Heart left ventricle (tissue), 16 donors: ENCODE measurements at regions of chr1 and their contacts with region 1.

Region 1: DNA sequence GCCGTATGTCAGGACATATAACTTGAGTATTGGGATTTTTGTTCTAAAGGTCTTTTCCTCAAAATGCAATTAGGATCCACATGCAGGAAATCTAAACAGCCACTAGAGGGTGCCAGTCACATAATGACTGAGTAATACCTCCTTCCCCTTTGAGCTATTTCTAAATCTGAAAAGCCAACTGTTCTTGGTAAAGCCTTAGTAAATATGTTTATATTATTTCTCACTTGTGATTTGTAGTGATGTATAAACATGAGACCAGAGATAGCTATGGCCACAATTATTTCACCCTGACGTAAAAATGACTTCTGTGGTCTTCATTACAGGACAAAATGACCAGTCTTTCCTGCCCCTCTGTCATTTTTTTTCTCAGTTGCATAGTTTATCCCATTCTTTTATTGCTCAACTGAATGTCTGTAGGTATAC is 41.0 kb upstream of the DR1 start:
- DNase-seq: peak in 2 of 5 donors; percentile 30 to 41
- ATAC-seq: peak in 3 of 4 donors; percentile 65 to 74 (median 70)
- H3K4me3 ChIP-seq: no peak overlapping the region
- H3K27ac ChIP-seq: no peak overlapping the region
- H3K4me1 ChIP-seq: peaks cover 0 to 5% (median 0%) of the 10 kb centered on the region in 12 donors
- H3K27me3 ChIP-seq: no peaks in the 10 kb centered on the region
- CTCF ChIP-seq: peak; percentile 80 to 96 (median 90)
- POLR2A ChIP-seq: no peak

Region 2: GRCh38 chr1:93155335-93155734 is 149.4 kb before region 1 on chr1:
- intact Hi-C with region 1: no loop called
- DNase-seq: no peak
- ATAC-seq: no peak
- H3K4me3 ChIP-seq: no peak overlapping the region
- H3K27ac ChIP-seq: no peak overlapping the region
- H3K4me1 ChIP-seq: peaks cover 0 to 7% (median 0%) of the 10 kb centered on the region in 12 donors
- H3K27me3 ChIP-seq: no peaks in the 10 kb centered on the region
- CTCF ChIP-seq: no peak
- POLR2A ChIP-seq: no peak

Region 3: DNA sequence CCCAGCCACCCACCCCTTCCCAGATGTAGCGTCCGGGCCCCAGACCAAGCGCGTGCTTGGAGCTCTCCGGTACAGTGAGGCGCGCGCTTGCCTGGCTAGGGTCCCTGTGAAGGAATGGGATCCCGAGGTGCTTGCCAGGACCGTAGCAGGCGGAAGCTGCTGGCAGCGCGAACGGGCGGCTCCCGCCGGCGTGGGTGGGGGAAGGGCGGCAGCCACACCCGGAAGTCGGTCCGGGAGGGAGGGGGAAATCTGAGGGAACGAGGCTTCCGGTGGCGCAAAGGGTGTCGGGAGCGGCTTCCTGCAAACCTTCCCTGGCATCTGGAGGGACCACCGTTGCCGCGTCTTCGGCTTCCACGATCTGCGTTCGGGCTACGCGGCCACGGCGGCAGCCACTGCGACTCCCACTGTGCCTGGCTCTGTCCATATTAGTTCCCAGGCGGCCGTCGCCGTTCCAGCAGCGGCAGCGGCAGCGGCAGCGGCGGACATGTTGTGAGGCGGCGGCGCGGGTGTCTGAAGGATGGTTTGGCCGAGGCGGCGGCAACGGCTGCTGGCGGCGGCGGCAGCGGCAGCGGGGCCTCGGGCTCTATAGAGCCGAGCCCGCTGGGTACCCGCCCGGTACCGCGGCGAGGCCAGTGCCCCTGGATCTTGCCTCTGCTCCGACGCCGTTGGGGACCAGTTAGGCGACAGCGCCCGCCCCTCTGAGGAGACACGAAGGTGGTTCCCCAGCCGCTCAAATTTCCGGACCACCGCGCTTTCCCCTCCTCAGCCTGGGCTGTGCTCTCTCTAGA is 41.1 kb after region 1 on chr1 and contains the start of gene DR1:
- intact Hi-C with region 1: loop called in 2 of 10 experiments (anchors 5 kb)
- DNase-seq: peak; percentile 96 to 97 (median 96)
- ATAC-seq: peak; percentile 94 to 98 (median 98)
- H3K4me3 ChIP-seq: peak within 1 kb of the TSS; percentile 65 to 98 (median 92)
- H3K27ac ChIP-seq: peak within 1 kb of the TSS; percentile 82 to 98 (median 94)
- H3K4me1 ChIP-seq: peaks cover 0 to 38% (median 28%) of the 10 kb centered on the region in 12 donors
- H3K27me3 ChIP-seq: no peaks in the 10 kb centered on the region
- CTCF ChIP-seq: no peak
- POLR2A ChIP-seq: peak in 1 of 2 donors; percentile 71
- total RNA-seq, gene DR1: 21.6 to 45.1 (median 37.8) TPM

Region 4: DNA sequence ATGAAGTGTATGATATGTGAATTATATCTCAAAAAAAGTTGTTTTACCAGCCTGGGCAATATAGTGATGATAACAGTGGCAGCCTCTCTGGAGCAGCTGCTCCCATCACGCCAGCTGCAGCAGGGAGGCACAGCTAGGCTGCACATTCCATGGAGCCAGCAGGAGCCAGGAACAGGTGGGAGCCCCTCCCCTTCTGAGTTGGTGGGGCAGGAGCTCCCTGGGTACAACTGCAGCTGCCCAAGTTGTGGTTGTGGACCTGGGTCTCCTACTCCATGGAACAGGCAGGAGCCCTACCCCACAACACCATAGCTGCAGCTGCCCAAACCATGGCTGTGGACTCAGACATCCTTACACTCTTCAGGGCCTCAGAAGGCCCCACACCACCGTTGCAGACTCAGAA is 121.5 kb after region 1 on chr1:
- intact Hi-C with region 1: loop called in 9 of 10 experiments (anchors 5 to 10 kb)
- DNase-seq: no peak
- ATAC-seq: no peak
- H3K4me3 ChIP-seq: no peak overlapping the region
- H3K27ac ChIP-seq: no peak overlapping the region
- H3K4me1 ChIP-seq: peaks cover 0 to 2% (median 0%) of the 10 kb centered on the region in 12 donors
- H3K27me3 ChIP-seq: no peaks in the 10 kb centered on the region
- CTCF ChIP-seq: no peak
- POLR2A ChIP-seq: no peak

Region 5: GRCh38 chr1:93437976-93438605 is 133.4 kb after region 1 on chr1:
- intact Hi-C with region 1: loop called in 8 of 10 experiments (anchors 5 to 10 kb)
- DNase-seq: no peak
- ATAC-seq: peak; percentile 42 to 71 (median 46)
- H3K4me3 ChIP-seq: no peak overlapping the region
- H3K27ac ChIP-seq: no peak overlapping the region
- H3K4me1 ChIP-seq: peaks cover 0 to 7% (median 0%) of the 10 kb centered on the region in 12 donors
- H3K27me3 ChIP-seq: no peaks in the 10 kb centered on the region
- CTCF ChIP-seq: peak; percentile 63 to 82 (median 72)
- POLR2A ChIP-seq: no peak

Region 6: GRCh38 chr1:93615582-93616150 is 310.9 kb after region 1 on chr1:
- intact Hi-C with region 1: loop called in 3 of 10 experiments (anchors 5 to 10 kb)
- DNase-seq: no peak
- ATAC-seq: no peak
- H3K4me3 ChIP-seq: no peak overlapping the region
- H3K27ac ChIP-seq: peak overlapping the region in 11 of 12 donors; percentile 39 to 79 (median 68)
- H3K4me1 ChIP-seq: peaks cover 7 to 84% (median 52%) of the 10 kb centered on the region in 12 donors
- H3K27me3 ChIP-seq: no peaks in the 10 kb centered on the region
- CTCF ChIP-seq: no peak
- POLR2A ChIP-seq: no peak

Region 7: GRCh38 chr1:93846211-93846991 is 541.7 kb after region 1 on chr1:
- intact Hi-C with region 1: loop called in 9 of 10 experiments (anchors 2 to 10 kb)
- DNase-seq: peak; percentile 89 to 93 (median 90)
- ATAC-seq: peak; percentile 49 to 78 (median 74)
- H3K4me3 ChIP-seq: peak overlapping the region; percentile 79 to 93 (median 86)
- H3K27ac ChIP-seq: peak overlapping the region; percentile 87 to 99 (median 98)
- H3K4me1 ChIP-seq: peaks cover 0 to 34% (median 22%) of the 10 kb centered on the region in 12 donors
- H3K27me3 ChIP-seq: no peaks in the 10 kb centered on the region
- CTCF ChIP-seq: peak in 9 of 12 donors; percentile 17 to 59 (median 39)
- POLR2A ChIP-seq: peak in 1 of 2 donors; percentile 47

Region 8: DNA sequence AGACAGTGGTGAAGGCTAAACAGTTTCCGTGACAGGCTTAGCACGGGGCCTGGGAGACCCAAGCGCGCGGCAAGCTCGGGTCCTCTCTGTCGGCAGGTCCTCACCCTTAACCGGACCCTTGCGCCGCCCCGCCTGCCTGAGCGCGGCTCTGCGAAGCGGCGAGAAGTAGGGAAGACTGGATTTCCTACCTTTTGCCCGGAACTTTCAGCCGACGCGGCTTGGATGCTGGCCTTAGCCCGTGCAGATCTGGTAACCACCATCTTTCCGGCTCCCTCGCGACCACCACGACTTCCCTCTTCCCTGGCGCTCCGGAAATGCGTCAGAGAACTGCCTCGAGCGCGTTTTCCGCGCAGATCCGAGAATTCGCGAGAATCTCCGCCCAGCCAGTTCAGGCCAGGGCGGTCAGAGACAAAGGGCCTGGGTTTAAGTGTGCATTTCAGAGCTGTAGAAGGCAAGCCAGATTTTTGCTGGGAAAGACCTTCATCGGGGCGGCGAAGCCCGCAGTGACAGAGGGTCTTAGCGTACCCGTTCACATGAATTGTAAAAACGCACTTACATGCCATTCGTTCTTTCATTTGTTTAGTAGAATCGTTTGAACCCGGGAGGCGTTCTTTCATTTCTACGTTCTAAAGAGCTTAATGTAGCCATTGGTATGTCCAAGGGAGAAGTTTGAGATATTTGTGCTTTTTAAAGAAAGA is 574.3 kb after region 1 on chr1 and contains the start of gene DNTTIP2:
- intact Hi-C with region 1: loop called in 1 of 10 experiments (anchors 10 kb)
- DNase-seq: peak; percentile 93 to 94 (median 94)
- ATAC-seq: peak; percentile 98 to 99 (median 99)
- H3K4me3 ChIP-seq: peak within 1 kb of the TSS; percentile 54 to 99 (median 89)
- H3K27ac ChIP-seq: peak within 1 kb of the TSS; percentile 60 to 98 (median 90)
- H3K4me1 ChIP-seq: peaks cover 0 to 38% (median 22%) of the 10 kb centered on the region in 12 donors
- H3K27me3 ChIP-seq: no peaks in the 10 kb centered on the region
- CTCF ChIP-seq: no peak
- POLR2A ChIP-seq: peak in 1 of 2 donors; percentile 77
- total RNA-seq, gene DNTTIP2: 17.7 to 47.6 (median 38.8) TPM